Motor neuron (in vitro differentiated cells): ENCODE measurements at regions of chr7 and their contacts with region 1.

Region 1: DNA sequence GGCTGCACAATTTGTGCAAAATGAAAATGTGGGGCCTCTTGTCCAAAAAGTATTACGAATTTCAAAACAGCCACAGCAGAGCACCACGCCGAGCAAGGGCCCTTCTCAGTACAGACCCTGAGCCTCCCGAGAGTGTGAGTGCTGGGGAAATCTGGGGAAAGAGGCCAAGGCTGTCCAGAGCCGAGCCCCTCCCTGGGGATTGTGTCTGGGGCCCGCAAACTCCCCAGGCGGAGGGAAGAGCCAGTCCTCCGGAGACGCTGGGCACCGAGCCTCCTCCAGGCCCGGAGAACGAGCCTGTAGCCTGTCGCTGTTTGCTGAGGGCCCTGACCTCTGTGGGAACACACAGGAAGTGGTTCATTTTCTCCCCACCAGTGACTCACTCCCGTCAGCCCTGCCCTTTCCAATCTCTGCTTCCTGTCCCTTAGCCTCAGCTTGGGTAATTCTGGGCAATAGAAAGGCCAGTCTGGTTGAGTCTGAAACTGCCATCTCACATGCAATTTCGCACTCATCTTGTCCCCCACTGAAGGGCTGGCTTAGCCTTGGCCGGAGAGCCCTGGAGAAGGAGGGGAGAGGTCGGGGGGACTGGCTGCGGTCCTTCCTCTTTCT is 19.5 kb upstream of the GNA12 start:
- ATAC-seq: peak; percentile 74 to 100 (median 88)
- H3K4me3 ChIP-seq: no peak overlapping the region
- H3K27ac ChIP-seq: no peak overlapping the region
- H3K4me1 ChIP-seq: peaks cover 17 to 25% of the 10 kb centered on the region in 2 donors

Region 2: GRCh38 chr7:2109936-2110585 is 753.5 kb before region 1 on chr7:
- in situ Hi-C with region 1: no loop called
- ATAC-seq: peak in 3 of 8 experiments; percentile 41 to 97 (median 93)
- H3K4me3 ChIP-seq: no peak overlapping the region
- H3K27ac ChIP-seq: no peak overlapping the region
- H3K4me1 ChIP-seq: peaks cover 65 to 73% of the 10 kb centered on the region in 2 donors

Region 3: GRCh38 chr7:4641667-4642467 is 1778.3 kb after region 1 on chr7:
- in situ Hi-C with region 1: loop called in 5 of 9 experiments (anchors 25 kb)
- ATAC-seq: peak; percentile 83 to 93 (median 92)
- H3K4me3 ChIP-seq: peak overlapping the region; percentile 40 to 52 (median 48)
- H3K27ac ChIP-seq: peak overlapping the region; percentile 72 to 90
- H3K4me1 ChIP-seq: peaks cover 7 to 9% of the 10 kb centered on the region in 2 donors